Activated T-helper 1 cell treated with anti-CD3 and anti-CD28 coated beads, Interleukin-12 subunit alpha, Interleukin-12 subunit beta, Interleukin-2, Interleukin-4 antibody, amounts not matched to agents 30 ng/mL and 10 ng/mL and 1 ng/mL, durations not matched to agents 14 hours and 24 hours and 36 hours (primary cell): ENCODE measurements at regions of chr9 and their contacts with region 1.

Region 1: DNA sequence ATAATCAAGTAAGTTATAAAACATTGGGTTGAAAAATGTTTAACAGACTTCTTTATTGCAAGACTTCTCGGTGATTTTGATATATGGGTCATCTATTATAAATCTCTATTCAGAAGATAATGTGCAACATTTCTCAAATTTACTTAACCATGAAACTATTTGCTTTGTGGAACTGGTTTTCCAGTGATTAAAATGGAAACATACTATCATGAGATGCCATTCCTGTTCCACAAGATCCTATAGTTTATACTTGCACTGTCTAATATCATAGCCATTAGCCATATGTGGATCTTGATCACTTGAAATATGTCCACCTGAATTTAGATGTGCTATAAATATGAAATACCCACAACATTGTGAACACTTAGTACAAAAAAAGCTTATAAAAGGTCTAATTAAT is 31.0 kb upstream of the RASEF start:
- DNase-seq: no peak
- H3K4me3 Mint-ChIP-seq: no peak overlapping the region
- H3K27ac Mint-ChIP-seq: no peak overlapping the region
- H3K4me1 Mint-ChIP-seq: no peaks in the 10 kb centered on the region
- H3K27me3 Mint-ChIP-seq: no peaks in the 10 kb centered on the region

Region 2: DNA sequence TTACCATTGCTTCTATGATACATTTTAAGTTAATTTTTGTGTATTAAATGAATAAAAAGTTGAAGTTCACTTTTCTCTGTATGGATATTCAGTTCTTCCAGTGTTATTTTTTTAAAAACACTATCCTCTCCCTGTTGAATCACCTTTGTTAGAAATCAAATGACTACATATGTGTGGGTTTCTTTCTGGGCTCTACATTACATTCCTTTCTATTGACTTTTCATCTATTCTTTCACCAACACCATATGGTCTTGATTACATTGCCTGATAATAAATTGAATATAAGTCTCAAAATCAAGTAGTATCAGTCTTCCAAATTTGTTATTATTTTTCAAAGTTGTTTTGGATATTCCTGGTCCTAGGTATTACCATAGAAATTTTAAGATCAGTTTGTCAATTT is 23.7 kb before region 1 on chr9:
- intact Hi-C with region 1: no loop called
- DNase-seq: no peak
- H3K4me3 Mint-ChIP-seq: no peak overlapping the region
- H3K27ac Mint-ChIP-seq: no peak overlapping the region
- H3K4me1 Mint-ChIP-seq: no peaks in the 10 kb centered on the region
- H3K27me3 Mint-ChIP-seq: no peaks in the 10 kb centered on the region

Region 3: DNA sequence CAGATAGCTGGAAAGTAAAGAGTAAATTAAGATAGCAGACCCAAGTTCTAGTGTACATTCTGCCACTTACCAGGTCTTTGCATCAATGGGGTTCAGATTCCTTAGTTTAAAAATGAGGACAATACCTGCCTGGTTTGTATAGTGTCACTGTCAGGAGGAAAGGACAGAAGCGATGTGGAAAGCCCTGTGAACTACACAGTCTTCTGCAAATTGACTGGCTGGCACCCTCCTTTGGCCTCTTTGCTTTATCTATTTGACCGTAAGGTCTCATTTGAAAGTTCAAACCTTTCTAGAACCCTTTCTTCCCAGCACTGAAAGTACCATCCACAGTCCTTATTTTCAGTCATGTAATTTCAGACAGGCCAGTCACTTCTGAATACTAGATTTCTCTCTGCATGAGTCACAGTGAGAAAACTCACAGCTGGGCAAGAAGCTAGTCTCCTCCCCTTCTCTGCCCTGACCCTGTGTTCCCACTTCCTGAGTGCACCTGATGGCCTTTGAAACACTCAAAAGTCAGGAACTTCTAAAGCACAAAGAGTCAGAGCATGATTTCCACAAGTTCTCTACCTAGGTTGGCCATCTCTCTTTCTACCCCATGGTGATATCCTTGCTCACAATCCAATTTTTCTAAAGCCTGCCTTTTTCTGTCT is 60.3 kb after region 1 on chr9:
- intact Hi-C with region 1: loop called (anchors 10 kb)
- DNase-seq: no peak
- H3K4me3 Mint-ChIP-seq: no peak overlapping the region
- H3K27ac Mint-ChIP-seq: no peak overlapping the region
- H3K4me1 Mint-ChIP-seq: peaks cover 6% of the 10 kb centered on the region
- H3K27me3 Mint-ChIP-seq: no peaks in the 10 kb centered on the region

Region 4: DNA sequence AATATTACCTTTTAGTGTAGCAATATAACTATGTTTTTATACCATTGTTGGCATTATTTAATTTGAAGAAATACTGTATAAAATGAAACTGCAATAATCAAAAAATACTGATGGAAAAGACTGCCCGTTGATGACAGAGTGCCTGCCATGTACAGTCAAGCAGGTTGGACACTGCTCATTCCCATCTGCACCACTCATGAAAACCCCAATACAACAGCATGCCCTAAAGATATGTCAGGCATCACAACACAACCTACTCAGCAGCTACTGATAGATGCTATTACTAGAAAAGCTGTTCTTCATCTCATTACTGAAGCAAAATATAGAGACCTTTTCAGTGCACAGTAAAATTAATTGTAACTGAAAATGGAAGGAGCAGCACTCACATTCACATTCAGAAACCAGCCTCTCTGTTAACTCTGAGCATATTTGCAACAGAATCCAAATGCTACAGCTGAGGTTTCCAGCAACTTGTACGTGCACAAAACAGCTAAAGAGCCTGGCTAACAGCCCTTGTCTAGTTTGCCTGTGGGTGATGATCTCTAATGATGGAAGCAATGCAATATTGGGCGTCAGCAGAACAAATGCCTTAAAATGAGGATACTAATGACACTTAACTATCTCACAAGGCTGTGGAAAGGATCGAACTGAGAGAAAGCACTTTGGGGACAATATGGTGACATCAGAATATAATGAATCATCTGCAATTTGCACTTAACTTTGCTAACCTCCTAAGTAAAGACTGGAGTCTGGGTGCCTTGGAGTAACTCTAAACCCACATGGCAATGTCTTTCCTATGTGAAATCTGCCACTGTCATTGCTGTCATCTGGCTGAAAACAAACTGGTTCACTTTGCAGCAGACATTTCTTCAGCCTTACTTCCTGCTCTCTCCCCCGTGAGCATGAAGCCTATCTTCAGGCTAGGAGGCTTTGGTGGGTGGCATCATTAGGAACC is 164.3 kb after region 1 on chr9:
- intact Hi-C with region 1: no loop called
- DNase-seq: no peak
- H3K4me3 Mint-ChIP-seq: no peak overlapping the region
- H3K27ac Mint-ChIP-seq: no peak overlapping the region
- H3K4me1 Mint-ChIP-seq: no peaks in the 10 kb centered on the region
- H3K27me3 Mint-ChIP-seq: no peaks in the 10 kb centered on the region